A549 (cell line): ENCODE measurements at regions of chr17 and their contacts with region 1.

Region 1: GRCh38 chr17:19362277-19363113 is at the start of gene B9D1:
- DNase-seq: peak; percentile 97 to 99
- ATAC-seq: peak; percentile 79 to 93
- H3K4me3 ChIP-seq: peak within 1 kb of the TSS; percentile 82
- H3K27ac ChIP-seq: peak within 1 kb of the TSS; percentile 94 to 96
- H3K4me1 ChIP-seq: peaks cover 16% of the 10 kb centered on the region; the same call in 2 of the 3 replicates
- CTCF ChIP-seq: peak; percentile 100
- EP300 ChIP-seq: no peak
- POLR2A ChIP-seq: peak; percentile 47
- RAD21 ChIP-seq: peak; percentile 100
- polyA plus RNA-seq, gene B9D1: 60.6 and 65.6 TPM in 2 replicates

Region 2: GRCh38 chr17:19309701-19310100 is 52.8 kb before region 1 on chr17:
- CTCF ChIA-PET with region 1: no interaction called
- POLR2A ChIA-PET with region 1: no interaction called
- DNase-seq: no peak
- ATAC-seq: peak in 1 of 2 experiments; percentile 23; a peak in 1 of 6 replicates
- H3K4me3 ChIP-seq: no peak overlapping the region
- H3K27ac ChIP-seq: no peak overlapping the region
- H3K4me1 ChIP-seq: no peaks in the 10 kb centered on the region
- CTCF ChIP-seq: no peak
- EP300 ChIP-seq: no peak
- POLR2A ChIP-seq: no peak
- RAD21 ChIP-seq: no peak

Region 3: DNA sequence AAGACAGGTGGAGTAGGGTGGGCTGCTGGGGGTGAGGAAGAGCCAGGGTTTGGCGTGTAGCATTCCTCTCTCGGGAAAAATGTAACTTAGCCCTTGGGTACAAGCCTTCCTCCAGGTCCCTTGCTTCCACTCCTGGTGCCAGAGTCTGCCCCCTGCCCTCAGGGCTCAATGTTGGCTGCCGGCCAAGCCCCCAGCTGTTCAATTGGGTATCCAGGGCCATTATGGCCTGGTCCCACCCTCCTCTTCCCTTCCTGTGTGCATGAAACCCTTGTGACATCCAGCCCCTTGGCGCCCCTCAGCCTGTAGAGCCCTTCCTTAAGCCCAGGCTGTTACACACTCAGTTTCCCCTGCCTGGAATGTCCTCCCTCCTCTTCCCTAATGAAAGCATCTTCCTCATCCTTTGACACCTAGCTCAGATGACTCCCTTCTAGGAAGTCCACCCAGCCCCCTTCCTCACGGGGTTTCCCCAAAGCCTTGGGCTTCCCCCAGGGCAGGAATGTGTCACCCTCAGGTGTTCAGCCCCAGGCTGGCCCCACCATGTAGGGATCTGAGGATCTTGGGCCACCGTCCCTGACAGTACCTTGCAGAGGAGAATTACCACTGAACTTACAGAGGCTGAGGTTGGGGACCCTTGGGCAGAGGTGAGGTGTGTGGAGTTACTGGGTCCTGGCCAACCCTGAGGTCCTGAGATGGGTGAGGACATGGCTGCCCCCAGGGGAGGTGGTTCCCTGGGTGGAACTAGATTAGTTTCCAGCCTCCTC is 29.9 kb before region 1 on chr17:
- CTCF ChIA-PET with region 1: interaction called, 20 read pairs
- POLR2A ChIA-PET with region 1: interaction called, 5 read pairs
- DNase-seq: no peak
- ATAC-seq: no peak
- H3K4me3 ChIP-seq: no peak overlapping the region
- H3K27ac ChIP-seq: no peak overlapping the region
- H3K4me1 ChIP-seq: peaks cover 12% of the 10 kb centered on the region
- CTCF ChIP-seq: no peak
- EP300 ChIP-seq: no peak
- POLR2A ChIP-seq: no peak
- RAD21 ChIP-seq: no peak

Region 4: DNA sequence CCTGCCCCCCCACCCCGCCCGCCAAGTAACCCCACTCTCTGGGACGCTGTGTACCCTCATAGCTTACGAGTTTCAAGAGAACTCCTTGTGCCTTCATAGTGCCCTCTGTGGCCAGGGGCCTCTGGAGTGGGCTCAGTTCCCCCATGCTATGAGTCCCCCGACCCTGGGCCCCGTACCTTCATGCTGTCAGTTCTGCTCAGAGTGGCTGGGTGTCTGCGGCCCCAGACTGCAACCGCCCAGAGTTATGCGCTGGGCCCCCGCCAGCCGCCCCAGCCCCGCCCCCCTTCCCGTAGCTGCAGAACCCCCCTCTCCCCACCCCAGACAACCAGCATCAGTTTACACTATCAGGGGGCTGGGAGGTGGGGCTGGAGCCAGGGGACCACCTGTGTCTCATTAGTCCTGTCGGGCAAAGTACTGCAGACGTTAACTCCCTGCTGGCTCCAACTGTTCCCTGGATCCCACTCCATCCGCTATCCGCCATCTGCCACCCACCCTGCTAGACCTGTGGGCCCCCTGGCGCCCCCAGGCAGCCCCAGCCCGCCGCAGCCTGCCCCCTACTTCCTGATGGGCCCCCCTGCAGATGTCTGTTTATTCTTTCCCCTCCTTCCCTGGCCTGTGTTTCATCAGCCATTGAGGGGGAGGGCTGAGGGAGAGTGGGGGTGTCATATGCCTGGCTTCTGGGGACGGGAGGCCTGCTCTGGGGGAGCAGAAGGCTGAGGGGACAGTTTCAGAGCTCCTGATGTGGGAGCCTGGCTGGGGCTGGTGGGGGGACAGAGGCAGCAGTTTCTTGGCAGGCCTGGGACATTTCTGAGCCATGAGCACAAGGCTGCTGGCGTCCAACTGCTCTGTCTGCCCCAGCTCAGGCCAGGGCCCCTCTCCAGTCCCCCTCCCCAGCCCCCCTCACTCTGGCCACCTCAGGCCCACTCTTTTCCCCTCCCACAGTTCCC is 24.8 kb after region 1 on chr17 and contains the start of gene MFAP4:
- CTCF ChIA-PET with region 1: interaction called, 148 read pairs
- POLR2A ChIA-PET with region 1: no interaction called
- DNase-seq: no peak
- ATAC-seq: peak in 1 of 2 experiments; percentile 17; a peak in 3 of 6 replicates
- H3K4me3 ChIP-seq: no peak within 1 kb of the TSS
- H3K27ac ChIP-seq: peak within 1 kb of the TSS; percentile 56 to 80
- H3K4me1 ChIP-seq: peaks cover 33% of the 10 kb centered on the region
- CTCF ChIP-seq: no peak
- EP300 ChIP-seq: no peak
- POLR2A ChIP-seq: no peak
- RAD21 ChIP-seq: no peak
- polyA plus RNA-seq, gene MFAP4: not detected in 2 replicates

Region 5: DNA sequence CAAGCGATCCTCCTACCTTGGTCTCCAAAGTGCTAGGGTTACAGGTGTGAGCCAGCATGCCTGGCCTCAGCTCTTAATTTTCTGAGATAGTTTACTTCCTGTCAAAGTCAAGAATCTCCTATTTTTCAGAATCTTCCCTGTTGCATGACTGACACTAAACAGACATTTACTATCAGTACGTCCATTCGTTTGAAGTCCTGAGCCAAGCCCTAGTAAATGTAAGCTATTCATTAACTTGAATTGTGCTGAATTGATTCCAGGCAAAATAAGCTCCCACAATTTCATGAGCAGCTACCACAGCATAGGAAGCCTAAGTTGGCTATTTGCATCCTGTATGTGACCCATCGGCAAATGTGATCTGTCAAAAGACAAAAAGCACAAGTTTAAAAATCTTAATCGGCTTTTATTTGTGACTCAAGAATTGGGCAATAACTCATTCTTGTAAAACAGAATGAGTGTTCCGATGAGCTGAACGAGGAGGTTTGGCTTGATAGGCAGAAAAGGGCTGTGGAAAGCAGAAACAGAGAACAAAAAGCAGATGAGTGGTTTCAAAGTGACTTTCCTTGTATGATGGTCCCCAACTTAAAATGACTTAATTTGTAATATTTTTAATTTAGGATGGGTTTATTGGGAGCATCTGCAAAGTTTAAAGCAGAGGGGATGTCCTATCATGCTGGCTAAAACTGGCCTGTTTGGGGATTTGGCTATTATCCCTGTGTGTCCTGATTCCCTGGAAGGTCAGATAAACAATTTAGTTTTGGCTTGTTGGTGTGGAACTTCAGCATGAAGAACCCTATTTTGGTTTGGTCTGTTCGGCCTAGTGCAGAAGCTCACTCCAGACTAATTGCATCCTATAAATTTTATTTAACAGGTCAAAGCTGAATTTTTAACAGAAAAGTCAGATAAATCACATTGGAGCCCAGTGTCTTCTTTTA is 62.7 kb after region 1 on chr17:
- CTCF ChIA-PET with region 1: interaction called, 12 read pairs
- POLR2A ChIA-PET with region 1: no interaction called
- DNase-seq: no peak
- ATAC-seq: no peak
- H3K4me3 ChIP-seq: no peak overlapping the region
- H3K27ac ChIP-seq: no peak overlapping the region
- H3K4me1 ChIP-seq: peaks cover 13% of the 10 kb centered on the region
- CTCF ChIP-seq: no peak
- EP300 ChIP-seq: no peak
- POLR2A ChIP-seq: no peak
- RAD21 ChIP-seq: no peak

Region 6: DNA sequence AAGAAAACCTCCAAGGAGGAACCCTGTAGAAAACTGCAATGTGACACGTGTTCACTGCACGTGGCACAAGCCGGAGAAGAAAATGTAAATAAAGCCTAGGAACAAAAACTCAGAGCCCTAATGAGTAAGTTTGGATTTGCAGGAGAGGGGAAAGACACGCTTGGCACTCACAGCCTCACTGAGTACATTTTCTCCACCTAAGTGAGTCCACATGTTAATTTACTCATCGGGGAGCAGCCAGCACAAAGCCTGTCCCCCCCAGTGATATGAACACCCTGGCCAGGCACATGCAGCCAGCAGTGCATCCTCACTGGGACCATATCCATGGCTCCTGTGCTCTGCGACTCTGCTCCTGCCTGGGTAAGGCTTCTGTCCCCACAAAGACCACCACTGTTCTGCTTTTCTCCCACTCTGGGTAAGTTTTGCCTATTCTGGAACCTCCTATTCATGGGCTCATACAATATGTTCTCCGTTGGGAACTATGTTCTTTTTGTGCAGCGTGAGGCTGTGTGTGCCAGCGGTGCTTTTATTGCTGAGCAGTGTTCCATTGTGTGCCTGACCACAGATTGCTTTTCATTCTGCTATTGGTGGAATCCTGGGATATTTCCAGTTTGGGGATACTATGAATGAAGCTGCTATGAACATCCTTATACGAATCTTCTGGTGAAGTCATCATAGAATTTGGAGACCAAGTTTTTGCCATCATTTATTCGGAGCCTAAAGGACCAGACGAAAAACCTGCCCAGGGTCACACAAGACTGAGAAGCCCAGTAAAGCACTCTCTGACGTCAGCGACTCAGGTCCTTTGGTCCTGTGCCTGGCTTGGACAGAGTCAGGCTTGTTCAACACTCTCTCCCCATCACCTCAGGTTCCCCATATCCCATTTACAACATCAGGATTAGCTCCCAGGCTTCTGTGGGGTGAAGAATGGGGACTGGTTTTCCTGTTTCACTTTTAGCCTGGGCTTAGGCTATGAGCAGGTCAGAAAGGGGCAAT is 101.8 kb after region 1 on chr17:
- CTCF ChIA-PET with region 1: interaction called, 20 read pairs
- POLR2A ChIA-PET with region 1: no interaction called
- DNase-seq: no peak
- ATAC-seq: no peak; a peak in 1 of 6 replicates
- H3K4me3 ChIP-seq: no peak overlapping the region
- H3K27ac ChIP-seq: no peak overlapping the region
- H3K4me1 ChIP-seq: no peaks in the 10 kb centered on the region
- CTCF ChIP-seq: no peak
- EP300 ChIP-seq: no peak
- POLR2A ChIP-seq: no peak
- RAD21 ChIP-seq: no peak

Region 7: GRCh38 chr17:19728079-19728495 is 365.6 kb after region 1 on chr17:
- CTCF ChIA-PET with region 1: interaction called, 10 read pairs
- POLR2A ChIA-PET with region 1: no interaction called
- DNase-seq: peak in 1 of 2 experiments; percentile 69
- ATAC-seq: peak; percentile 52 to 54; a peak in 5 of 6 replicates
- H3K4me3 ChIP-seq: no peak overlapping the region
- H3K27ac ChIP-seq: peak overlapping the region; percentile 67 to 82
- H3K4me1 ChIP-seq: peaks cover 35% of the 10 kb centered on the region
- CTCF ChIP-seq: no peak
- EP300 ChIP-seq: no peak
- POLR2A ChIP-seq: no peak
- RAD21 ChIP-seq: no peak